CD4-positive, alpha-beta memory T cell (primary cell): ENCODE measurements at regions of chr18 and their contacts with region 1.

Region 1: DNA sequence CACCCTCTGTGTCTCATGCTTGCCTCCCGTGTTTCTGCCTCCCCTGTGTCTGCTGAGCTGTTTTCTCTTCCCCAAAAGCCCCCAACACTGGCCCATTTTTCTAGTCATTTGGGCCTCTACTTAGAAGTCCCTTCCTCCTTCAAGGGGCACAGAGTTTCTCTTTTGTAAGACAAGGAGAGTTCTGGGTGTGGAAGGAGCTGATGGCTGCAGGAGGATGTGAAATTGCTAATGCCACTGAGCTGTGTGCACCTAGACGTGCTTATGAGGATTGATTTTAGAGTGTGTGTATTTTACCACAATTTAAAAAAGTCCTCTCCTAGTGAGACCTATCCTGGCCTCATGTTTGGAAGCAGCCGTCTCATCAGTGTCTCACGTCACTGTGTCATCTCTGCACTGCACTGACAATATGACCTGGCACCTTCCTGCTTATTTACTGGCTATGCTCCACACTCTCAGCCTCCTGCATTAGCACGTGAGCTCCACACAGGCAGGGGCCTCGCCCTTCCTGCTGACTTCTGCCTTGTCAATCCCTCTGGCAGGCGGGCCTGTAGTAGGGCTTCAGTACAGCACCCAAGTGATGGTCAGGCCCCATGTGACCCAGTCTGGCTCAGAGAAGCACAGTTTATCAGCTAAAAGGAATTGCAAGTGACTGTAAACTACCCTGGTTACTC is 8.0 kb upstream of the MBP start:
- DNase-seq: peak; percentile 58 to 73 (median 60)
- H3K4me3 ChIP-seq: no peak overlapping the region
- H3K4me3 Mint-ChIP-seq: peak overlapping the region in 7 of 8 donors; percentile 24 to 63 (median 36)
- H3K27ac ChIP-seq: no peak overlapping the region
- H3K27ac Mint-ChIP-seq: peak overlapping the region; percentile 74 to 94 (median 87)
- H3K4me1 ChIP-seq: peaks cover 30% of the 10 kb centered on the region
- H3K4me1 Mint-ChIP-seq: peaks cover 33 to 69% (median 43%) of the 10 kb centered on the region in 4 donors
- H3K27me3 ChIP-seq: no peaks in the 10 kb centered on the region
- H3K27me3 Mint-ChIP-seq: no peaks in the 10 kb centered on the region

Region 2: DNA sequence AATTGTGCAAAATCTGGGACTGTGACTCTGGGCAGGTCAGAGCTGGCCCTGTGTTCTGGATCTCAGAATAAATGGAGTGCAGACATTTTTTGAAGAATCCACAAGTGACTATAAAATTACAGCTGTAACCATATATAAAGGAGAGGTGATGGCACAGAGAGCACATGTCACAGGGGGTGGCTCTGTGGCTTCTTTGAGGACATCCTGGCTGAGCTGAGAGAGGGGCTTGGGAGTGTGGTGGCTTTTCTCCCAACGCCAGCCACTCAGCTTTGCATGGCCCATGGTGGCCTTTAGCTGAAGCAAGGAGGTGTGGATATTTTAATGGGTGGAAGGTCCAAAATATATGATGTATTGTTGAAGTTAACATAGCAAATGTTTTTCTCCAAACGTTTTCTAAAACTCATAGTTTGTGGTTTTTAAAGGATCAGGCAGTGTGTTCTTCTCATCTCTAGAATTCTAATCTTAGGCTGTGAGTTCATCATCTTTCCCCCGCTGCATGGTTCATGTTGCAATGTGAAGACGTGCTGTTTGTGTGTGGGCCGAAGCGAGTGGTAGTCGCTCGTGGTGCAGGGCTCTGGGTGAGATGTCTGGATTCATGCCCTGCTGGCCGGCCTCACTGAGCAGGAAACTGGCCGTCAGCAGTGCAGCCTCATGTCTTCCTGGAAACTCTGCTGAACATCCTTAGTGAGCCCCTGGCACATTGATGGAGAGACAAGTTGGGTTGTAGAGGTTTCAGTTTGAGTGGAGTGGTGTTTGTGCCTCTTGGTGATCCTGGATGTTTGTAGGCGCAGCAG is 208.4 kb before region 1 on chr18:
- CTCF ChIA-PET with region 1: no interaction called
- POLR2A ChIA-PET with region 1: no interaction called
- intact Hi-C with region 1: no loop called
- DNase-seq: no peak
- H3K4me3 ChIP-seq: no peak overlapping the region
- H3K4me3 Mint-ChIP-seq: no peak overlapping the region
- H3K27ac ChIP-seq: no peak overlapping the region
- H3K27ac Mint-ChIP-seq: peak overlapping the region in 4 of 7 donors; percentile 17 to 73 (median 26)
- H3K4me1 ChIP-seq: no peaks in the 10 kb centered on the region
- H3K4me1 Mint-ChIP-seq: no peaks in the 10 kb centered on the region
- H3K27me3 ChIP-seq: no peaks in the 10 kb centered on the region
- H3K27me3 Mint-ChIP-seq: no peaks in the 10 kb centered on the region

Region 3: DNA sequence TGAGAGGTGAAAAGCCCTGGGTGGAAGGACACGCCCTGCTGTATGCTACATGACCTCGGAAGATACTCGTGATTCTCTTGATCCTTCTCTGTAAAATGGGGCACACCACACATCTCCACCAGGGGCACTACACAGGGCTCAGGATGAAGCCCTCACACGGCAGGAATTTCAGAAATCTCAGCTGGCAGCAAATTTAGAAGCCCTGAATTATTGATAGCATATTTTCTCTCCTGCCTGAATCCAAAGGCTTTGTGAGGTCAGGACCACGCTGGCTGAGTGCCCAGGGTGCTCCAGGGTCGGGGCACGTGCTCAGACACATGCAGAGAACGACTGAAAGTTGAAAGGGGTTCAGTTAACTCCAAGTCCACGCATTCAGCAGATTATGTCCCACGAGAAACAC is 67.0 kb after region 1 on chr18:
- CTCF ChIA-PET with region 1: interaction called, 5 read pairs
- POLR2A ChIA-PET with region 1: no interaction called
- intact Hi-C with region 1: loop called (anchors 2 kb)
- DNase-seq: peak; percentile 55 to 79 (median 67)
- H3K4me3 ChIP-seq: no peak overlapping the region
- H3K4me3 Mint-ChIP-seq: peak overlapping the region; percentile 60 to 80 (median 72)
- H3K27ac ChIP-seq: no peak overlapping the region
- H3K27ac Mint-ChIP-seq: peak overlapping the region; percentile 41 to 92 (median 85)
- H3K4me1 ChIP-seq: peaks cover 37% of the 10 kb centered on the region
- H3K4me1 Mint-ChIP-seq: peaks cover 29 to 52% (median 41%) of the 10 kb centered on the region in 4 donors
- H3K27me3 ChIP-seq: no peaks in the 10 kb centered on the region
- H3K27me3 Mint-ChIP-seq: peaks cover 0 to 4% of the 10 kb centered on the region in 2 donors

Region 4: GRCh38 chr18:77366720-77367641 is 226.4 kb after region 1 on chr18:
- CTCF ChIA-PET with region 1: no interaction called
- POLR2A ChIA-PET with region 1: no interaction called
- intact Hi-C with region 1: no loop called
- DNase-seq: no peak
- H3K4me3 ChIP-seq: no peak overlapping the region
- H3K4me3 Mint-ChIP-seq: no peak overlapping the region
- H3K27ac ChIP-seq: no peak overlapping the region
- H3K27ac Mint-ChIP-seq: no peak overlapping the region
- H3K4me1 ChIP-seq: no peaks in the 10 kb centered on the region
- H3K4me1 Mint-ChIP-seq: no peaks in the 10 kb centered on the region
- H3K27me3 ChIP-seq: no peaks in the 10 kb centered on the region
- H3K27me3 Mint-ChIP-seq: peaks cover 24 to 34% of the 10 kb centered on the region in 2 donors